Mammary epithelial cell (primary cell): ENCODE measurements at regions of chr1 and their contacts with region 1.

Region 1: DNA sequence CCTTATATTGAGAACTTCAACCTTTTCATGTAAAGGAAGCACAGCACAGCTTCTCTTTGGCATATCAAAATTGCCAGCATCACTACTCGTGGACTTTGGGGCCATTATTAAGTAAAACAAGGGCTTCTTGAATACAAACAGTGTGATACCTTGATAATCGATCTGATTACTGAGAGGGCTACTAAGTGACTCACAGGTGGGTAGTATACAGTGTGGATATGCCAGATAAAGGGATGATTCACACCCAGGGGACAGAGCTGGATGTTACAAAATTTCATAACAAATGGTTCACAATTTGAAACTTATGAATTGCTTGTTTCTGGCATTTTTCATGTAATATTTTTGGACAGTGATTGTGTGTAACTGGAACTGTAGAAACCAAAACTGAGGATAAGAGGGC is 15.4 kb downstream of the HDAC1 start:
- DNase-seq: peak; percentile 47
- H3K4me3 ChIP-seq: no peak overlapping the region
- H3K27ac ChIP-seq: no peak overlapping the region
- H3K4me1 ChIP-seq: peaks cover 5% of the 10 kb centered on the region
- H3K27me3 ChIP-seq: no peaks in the 10 kb centered on the region
- CTCF ChIP-seq: no peak

Region 2: GRCh38 chr1:32221980-32222755 is 85.2 kb before region 1 on chr1 and contains the starts of genes EIF3I and TMEM234:
- CTCF ChIA-PET with region 1: no interaction called
- dilution Hi-C with region 1: no loop called
- in situ Hi-C with region 1: loop called in 1 of 2 experiments (anchors 10 kb)
- intact Hi-C with region 1: no loop called
- DNase-seq: peak; percentile 86
- H3K4me3 ChIP-seq: peak within 1 kb of the TSS; percentile 52 to 69 (median 64)
- H3K27ac ChIP-seq: peak within 1 kb of the TSS; percentile 95
- H3K4me1 ChIP-seq: peaks cover 11% of the 10 kb centered on the region
- H3K27me3 ChIP-seq: no peaks in the 10 kb centered on the region
- CTCF ChIP-seq: no peak
- total RNA-seq, gene EIF3I: 230 to 277 TPM
- total RNA-seq, gene TMEM234: 18.2 to 24.4 TPM

Region 3: GRCh38 chr1:32454726-32455125 is 147.4 kb after region 1 on chr1:
- CTCF ChIA-PET with region 1: no interaction called
- dilution Hi-C with region 1: no loop called
- in situ Hi-C with region 1: no loop called
- intact Hi-C with region 1: no loop called
- DNase-seq: peak; percentile 30
- H3K4me3 ChIP-seq: no peak overlapping the region
- H3K27ac ChIP-seq: no peak overlapping the region
- H3K4me1 ChIP-seq: no peaks in the 10 kb centered on the region
- H3K27me3 ChIP-seq: no peaks in the 10 kb centered on the region
- CTCF ChIP-seq: no peak